ENCODE measurements at regions of chr18 and their contacts with region 1.

Region 1: GRCh38 chr18:47870605-47871004 is 59.9 kb downstream of the SMAD2 start:
- DNase-seq: no peak
- H3K4me3 ChIP-seq: no peak overlapping the region
- H3K27ac ChIP-seq: no peak overlapping the region
- H3K4me1 ChIP-seq: peaks cover 0 to 24% (median 14%) of the 10 kb centered on the region in 4 donors
- H3K27me3 ChIP-seq: no peaks in the 10 kb centered on the region
- CTCF ChIP-seq: no peak
- EP300 ChIP-seq: no peak
- POLR2A ChIP-seq: no peak

Region 2: GRCh38 chr18:47826157-47827074 is 44.2 kb before region 1 on chr18:
- intact Hi-C with region 1: no loop called
- DNase-seq: no peak
- H3K4me3 ChIP-seq: no peak overlapping the region
- H3K27ac ChIP-seq: no peak overlapping the region
- H3K4me1 ChIP-seq: no peaks in the 10 kb centered on the region
- H3K27me3 ChIP-seq: no peaks in the 10 kb centered on the region
- CTCF ChIP-seq: no peak
- EP300 ChIP-seq: no peak
- POLR2A ChIP-seq: no peak

Region 3: GRCh38 chr18:47912343-47912742 is 41.7 kb after region 1 on chr18:
- intact Hi-C with region 1: loop called (anchors 5 kb)
- DNase-seq: peak; percentile 72
- H3K4me3 ChIP-seq: no peak overlapping the region
- H3K27ac ChIP-seq: peak overlapping the region in 3 of 4 donors; percentile 68 to 84 (median 79)
- H3K4me1 ChIP-seq: peaks cover 0 to 86% (median 54%) of the 10 kb centered on the region in 4 donors
- H3K27me3 ChIP-seq: no peaks in the 10 kb centered on the region
- CTCF ChIP-seq: no peak
- EP300 ChIP-seq: peak in 1 of 4 donors; percentile 22
- POLR2A ChIP-seq: no peak